GM18951 (cell line): ENCODE measurements at regions of chr12 and their contacts with region 1.

Region 1: DNA sequence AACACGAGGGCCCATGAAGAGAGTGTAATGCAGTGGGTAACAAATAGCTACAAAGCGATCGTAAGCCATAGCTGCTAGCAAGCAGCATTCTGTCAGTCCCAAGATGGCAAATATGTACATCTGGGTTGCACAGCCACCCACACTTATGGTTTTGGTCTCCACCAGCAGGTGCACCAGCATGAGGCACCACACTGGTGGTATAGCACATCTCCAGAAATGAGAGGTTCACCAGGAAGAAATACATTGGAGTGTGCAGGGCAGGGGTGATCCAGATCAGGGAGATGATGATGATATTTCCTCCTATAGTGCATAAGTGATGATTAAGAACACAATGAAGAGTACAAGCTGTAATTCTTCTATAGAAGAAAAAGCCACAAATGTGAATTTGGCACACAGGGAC is 26.4 kb upstream of the OR10A7 start:
- POLR2A ChIP-seq: no peak

Region 2: GRCh38 chr12:55132816-55133215 is 61.6 kb before region 1 on chr12:
- in situ Hi-C with region 1: no loop called
- POLR2A ChIP-seq: no peak

Region 3: GRCh38 chr12:55619354-55620138 is 425.2 kb after region 1 on chr12:
- in situ Hi-C with region 1: loop called (anchors 10 kb)
- POLR2A ChIP-seq: no peak